ENCODE measurements at regions of chr13 and their contacts with region 1.

Region 1: DNA sequence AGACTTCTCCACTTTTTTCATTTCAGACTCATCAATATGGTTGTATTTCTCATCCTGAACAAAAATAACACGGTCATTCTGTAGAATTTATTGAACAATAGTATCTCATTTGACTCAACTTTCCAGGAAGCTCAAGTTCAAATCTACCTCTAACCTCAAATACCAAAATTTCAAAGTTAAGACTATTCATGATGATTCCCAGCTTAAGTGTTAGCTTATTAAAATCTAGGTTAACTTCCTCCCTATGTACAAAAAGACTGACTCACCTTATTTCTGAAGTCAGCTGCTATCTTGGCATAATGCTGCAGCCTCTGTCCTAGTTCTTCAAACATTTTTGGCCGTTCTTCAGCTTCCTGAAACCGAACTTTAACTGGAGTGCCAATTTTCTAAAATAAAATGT is 23.2 kb downstream of the HSPH1 start:
- DNase-seq: no peak
- ATAC-seq: no peak
- H3K4me3 ChIP-seq: no peak overlapping the region
- H3K27ac ChIP-seq: no peak overlapping the region
- H3K4me1 ChIP-seq: no peaks in the 10 kb centered on the region
- H3K27me3 ChIP-seq: no peaks in the 10 kb centered on the region
- CTCF ChIP-seq: no peak
- EP300 ChIP-seq: no peak
- POLR2A ChIP-seq: no peak
- RAD21 ChIP-seq: no peak

Region 2: DNA sequence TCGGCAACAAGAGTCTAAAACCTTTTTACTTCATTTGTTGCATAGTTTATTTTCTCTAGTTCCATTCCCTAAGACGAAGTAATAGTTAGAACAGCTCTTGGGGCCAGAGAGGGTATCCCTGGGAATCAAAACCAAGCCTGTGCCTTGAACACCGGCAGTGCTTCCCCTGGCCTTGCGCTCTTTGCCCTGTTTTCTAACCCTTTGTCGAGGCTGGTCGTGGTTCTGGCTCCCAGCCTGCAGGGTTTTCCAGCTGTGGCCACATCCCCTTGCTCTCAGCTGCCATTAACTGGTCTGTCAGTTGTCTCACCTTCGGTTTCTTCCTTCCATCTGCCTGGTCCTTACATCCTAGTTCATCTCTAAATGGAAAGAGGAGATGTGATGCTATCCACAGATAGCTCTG is 37.8 kb before region 1 on chr13:
- CTCF ChIA-PET with region 1: no interaction called
- POLR2A ChIA-PET with region 1: no interaction called
- RAD21 ChIA-PET with region 1: no interaction called
- SMC1A ChIA-PET with region 1: no interaction called
- in situ Hi-C with region 1: no loop called
- intact Hi-C with region 1: no loop called
- DNase-seq: no peak
- ATAC-seq: no peak
- H3K4me3 ChIP-seq: no peak overlapping the region
- H3K27ac ChIP-seq: no peak overlapping the region
- H3K4me1 ChIP-seq: peaks cover 5% of the 10 kb centered on the region; the same call in 1 of the 2 replicates
- H3K27me3 ChIP-seq: peaks cover 0 to 1% of the 10 kb centered on the region in 2 experiments; a peak in 2 of 4 replicates
- CTCF ChIP-seq: no peak
- EP300 ChIP-seq: no peak
- POLR2A ChIP-seq: no peak
- RAD21 ChIP-seq: no peak

Region 3: DNA sequence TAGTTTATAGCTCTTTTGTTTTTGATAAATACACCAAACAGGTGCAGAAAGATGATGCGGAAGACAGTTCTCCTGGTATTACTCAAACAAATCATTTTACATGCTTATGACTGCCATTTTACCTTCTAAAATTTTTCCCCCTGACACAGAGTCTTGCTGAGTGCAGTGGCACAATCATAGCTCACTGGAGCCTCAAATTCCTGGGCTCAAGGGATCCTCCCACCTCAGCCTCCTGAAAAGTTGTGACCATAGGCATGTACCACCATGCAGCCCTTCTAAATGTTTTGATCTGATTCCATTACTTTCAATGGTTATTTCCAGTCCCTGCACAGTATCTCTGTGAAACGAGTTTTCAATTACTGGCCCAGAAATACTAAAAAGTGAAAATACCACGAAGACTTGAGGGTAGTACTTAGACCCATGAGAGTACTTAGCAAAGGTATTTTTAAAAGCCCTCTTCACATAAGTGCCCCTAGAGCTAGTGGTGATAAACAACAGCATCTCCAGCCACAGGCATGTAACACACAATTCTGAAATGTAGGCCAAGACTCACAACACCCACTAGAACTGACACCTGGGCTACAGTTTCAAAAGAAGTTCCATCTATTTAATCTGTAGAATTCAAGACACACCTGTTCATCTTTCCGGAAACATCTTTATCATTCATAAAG is 11.9 kb after region 1 on chr13:
- CTCF ChIA-PET with region 1: interaction called, 5 read pairs
- POLR2A ChIA-PET with region 1: no interaction called
- RAD21 ChIA-PET with region 1: no interaction called
- SMC1A ChIA-PET with region 1: interaction called, 22 read pairs
- in situ Hi-C with region 1: no loop called
- intact Hi-C with region 1: loop called (anchors 2 kb)
- DNase-seq: no peak
- ATAC-seq: peak; percentile 29; the same call in 2 of the 3 replicates
- H3K4me3 ChIP-seq: no peak overlapping the region
- H3K27ac ChIP-seq: no peak overlapping the region
- H3K4me1 ChIP-seq: no peaks in the 10 kb centered on the region
- H3K27me3 ChIP-seq: no peaks in the 10 kb centered on the region
- CTCF ChIP-seq: no peak
- EP300 ChIP-seq: no peak
- POLR2A ChIP-seq: no peak
- RAD21 ChIP-seq: no peak

Region 4: GRCh38 chr13:31282741-31283455 is 144.4 kb after region 1 on chr13:
- CTCF ChIA-PET with region 1: no interaction called
- POLR2A ChIA-PET with region 1: no interaction called
- RAD21 ChIA-PET with region 1: no interaction called
- SMC1A ChIA-PET with region 1: no interaction called
- in situ Hi-C with region 1: no loop called
- intact Hi-C with region 1: no loop called
- DNase-seq: no peak
- ATAC-seq: no peak
- H3K4me3 ChIP-seq: no peak overlapping the region
- H3K27ac ChIP-seq: no peak overlapping the region
- H3K4me1 ChIP-seq: no peaks in the 10 kb centered on the region
- H3K27me3 ChIP-seq: no peaks in the 10 kb centered on the region
- CTCF ChIP-seq: no peak
- EP300 ChIP-seq: no peak
- POLR2A ChIP-seq: no peak
- RAD21 ChIP-seq: no peak